Head of caudate nucleus (tissue), 42 donors: ENCODE measurements at regions of chr14 and their contacts with region 1.

Region 1: DNA sequence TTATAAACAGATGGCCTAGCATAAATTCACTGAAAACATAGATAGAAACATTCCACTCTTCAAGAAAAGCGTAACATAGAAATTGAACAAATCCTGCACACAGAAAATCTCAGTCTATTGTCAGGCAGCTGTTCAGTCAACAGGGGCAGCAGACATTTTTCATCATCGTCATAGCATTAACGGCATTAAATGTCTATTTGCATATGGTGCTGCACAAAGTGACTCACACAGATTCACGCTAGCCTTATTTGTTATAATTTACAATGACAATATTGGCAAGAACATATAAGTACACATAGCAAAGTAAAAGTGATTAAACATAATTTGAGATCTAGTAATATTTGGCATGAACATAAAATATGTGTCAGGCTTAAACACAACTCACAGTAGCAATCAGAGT is 95.7 kb downstream of the CEP128 start:
- DNase-seq: no peak

Region 2: GRCh38 chr14:80055667-80056496 is 790.0 kb before region 1 on chr14:
- intact Hi-C with region 1: loop called (anchors 10 kb)
- DNase-seq: peak in 41 of 42 donors; percentile 1 to 81 (median 51)

Region 3: DNA sequence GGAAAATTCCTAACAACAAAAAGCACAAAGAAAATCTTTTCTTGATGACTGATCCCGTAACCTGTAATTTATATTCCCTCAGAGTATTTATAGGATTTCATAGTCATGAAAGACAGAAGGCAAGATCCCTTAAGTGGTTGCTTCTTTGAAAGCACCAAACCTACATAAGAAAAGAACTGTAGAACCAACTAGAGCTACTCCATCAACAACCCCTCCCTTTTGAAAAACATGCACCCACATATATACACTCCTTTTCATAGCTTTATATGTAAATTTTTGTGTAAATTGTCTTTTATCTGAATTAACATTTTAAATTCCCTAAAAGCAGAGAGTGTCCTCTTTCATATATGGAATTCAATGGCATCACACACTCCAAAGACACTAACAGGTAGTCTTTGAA is 119.6 kb before region 1 on chr14:
- intact Hi-C with region 1: no loop called
- DNase-seq: no peak

Region 4: DNA sequence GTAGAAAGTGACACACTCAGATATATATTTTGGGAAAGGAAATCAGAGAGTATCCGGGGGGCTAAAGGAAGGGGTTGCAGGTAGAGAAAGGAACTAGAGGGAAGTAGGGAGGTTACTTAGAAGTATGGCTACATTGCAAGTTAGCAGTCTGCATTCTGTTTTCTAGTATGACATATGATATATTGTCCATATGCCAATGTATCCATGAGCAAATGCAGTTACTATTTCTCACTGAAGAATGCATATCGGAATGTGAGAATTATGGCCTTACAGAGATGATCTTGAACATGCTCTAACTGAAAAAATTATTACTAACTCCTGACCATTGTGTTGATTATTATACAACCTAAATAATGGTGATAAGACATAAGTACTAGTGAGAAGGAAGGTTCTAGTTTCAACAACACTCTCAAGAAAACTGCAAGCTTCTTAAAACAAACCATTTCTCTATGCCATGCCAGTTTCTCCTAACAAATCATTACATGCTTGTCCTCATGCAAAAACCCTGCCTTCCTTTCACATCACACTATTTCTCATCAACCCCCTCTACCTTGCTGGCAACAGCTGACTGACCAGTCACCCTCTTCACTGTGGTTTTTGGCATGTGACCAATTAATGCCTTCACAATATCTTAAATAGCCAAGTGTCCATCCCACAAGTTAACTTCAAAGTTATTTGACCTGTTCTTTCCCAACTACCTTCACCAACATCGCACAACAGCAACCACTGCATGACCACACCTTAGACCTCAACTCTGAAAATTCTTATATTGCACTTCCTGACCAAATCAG is 64.1 kb before region 1 on chr14:
- intact Hi-C with region 1: no loop called
- DNase-seq: no peak